ENCODE measurements at regions of chr10 and their contacts with region 1.

Region 1: DNA sequence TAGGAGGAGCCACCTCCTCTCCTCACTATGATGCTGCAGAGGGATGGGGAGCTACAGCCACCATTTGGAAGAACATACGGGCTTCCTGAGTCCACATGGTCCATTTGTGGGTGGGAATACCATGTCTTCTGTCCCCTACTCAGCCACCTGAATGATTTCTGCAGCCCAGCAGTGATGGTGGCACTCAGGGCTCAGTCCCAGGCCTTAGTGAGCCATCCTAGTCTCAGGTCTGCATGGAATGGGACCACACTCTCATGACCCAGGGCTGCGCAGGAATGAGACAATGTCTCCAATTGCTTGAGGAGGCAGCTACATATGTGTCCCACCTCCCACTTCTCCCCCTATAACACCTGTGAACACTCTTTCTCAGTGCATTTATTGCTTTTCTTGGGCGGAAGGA is 4.8 kb downstream of the SFTPA1 start:
- DNase-seq: no peak
- H3K4me3 ChIP-seq: no peak overlapping the region
- H3K27ac ChIP-seq: no peak overlapping the region
- H3K27me3 ChIP-seq: no peaks in the 10 kb centered on the region
- CTCF ChIP-seq: no peak

Region 2: GRCh38 chr10:79555354-79556309 is 59.9 kb before region 1 on chr10:
- intact Hi-C with region 1: loop called in 1 of 2 experiments (anchors 2 kb)
- DNase-seq: no peak
- H3K4me3 ChIP-seq: no peak overlapping the region
- H3K27ac ChIP-seq: no peak overlapping the region
- H3K27me3 ChIP-seq: peaks cover 0 to 3% (median 0%) of the 10 kb centered on the region in 45 donors
- CTCF ChIP-seq: no peak